ENCODE measurements at regions of chr10 and their contacts with region 1.

Region 1: DNA sequence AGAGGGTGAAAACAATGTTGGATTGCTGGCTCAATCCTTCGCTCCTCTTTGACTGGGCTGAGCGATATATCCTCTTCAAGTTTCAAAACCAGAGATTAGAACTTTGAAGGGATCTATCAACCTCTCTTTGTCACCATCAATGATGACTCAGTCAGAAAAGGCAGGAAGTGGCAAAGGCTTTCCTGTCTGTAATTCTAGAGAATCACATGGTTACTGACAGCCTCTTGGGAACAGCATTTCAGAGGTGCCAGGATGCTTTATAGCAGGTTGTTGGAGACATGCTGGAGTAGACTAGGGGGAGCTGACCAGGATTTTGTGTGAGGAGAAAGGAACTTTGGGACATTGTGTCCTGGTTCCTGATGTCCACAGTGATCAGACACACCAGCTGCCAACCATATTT is 81.3 kb downstream of the PRKCQ start:
- DNase-seq: peak; percentile 48
- H3K4me3 Mint-ChIP-seq: peak overlapping the region; percentile 65
- H3K27ac Mint-ChIP-seq: peak overlapping the region; percentile 87
- H3K4me1 Mint-ChIP-seq: peaks cover 27% of the 10 kb centered on the region
- H3K27me3 Mint-ChIP-seq: no peaks in the 10 kb centered on the region

Region 2: DNA sequence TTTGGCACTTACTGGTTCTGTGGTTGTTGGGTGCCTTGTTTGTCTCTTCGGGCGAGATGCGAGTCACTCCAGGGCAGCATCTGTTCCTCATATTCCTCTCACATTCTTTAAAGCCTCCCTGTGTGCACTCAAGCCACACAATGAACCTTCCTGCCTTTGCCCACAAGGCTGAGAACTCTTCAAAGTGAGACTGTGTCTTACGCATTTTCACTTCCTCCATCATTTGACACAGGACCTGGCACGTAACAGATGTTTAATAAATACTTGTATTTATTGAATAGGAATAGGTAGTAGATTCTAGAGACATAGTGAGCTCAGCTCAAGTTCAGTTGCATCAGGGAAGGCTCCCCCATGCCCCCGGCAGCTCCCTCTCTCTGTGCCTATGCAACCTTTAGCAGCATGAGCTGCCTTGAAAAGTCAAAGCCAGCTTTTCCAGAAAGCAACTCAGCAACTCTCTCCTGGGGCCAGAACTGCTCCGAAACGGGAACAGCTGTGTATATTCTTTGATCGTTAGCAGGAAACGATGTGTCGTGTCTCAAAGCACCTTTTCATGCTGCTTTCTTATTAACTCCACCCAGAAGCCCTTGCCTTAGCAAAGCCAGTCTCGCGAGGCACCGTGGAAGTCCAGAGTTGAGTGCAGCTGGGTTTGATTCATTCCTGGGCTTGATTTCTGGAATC is 198.5 kb before region 1 on chr10:
- intact Hi-C with region 1: loop called (anchors 10 kb)
- DNase-seq: peak; percentile 15
- H3K4me3 Mint-ChIP-seq: peak overlapping the region; percentile 69
- H3K27ac Mint-ChIP-seq: peak overlapping the region; percentile 88
- H3K4me1 Mint-ChIP-seq: peaks cover 57% of the 10 kb centered on the region
- H3K27me3 Mint-ChIP-seq: no peaks in the 10 kb centered on the region

Region 3: GRCh38 chr10:6473901-6474370 is 24.8 kb before region 1 on chr10:
- intact Hi-C with region 1: loop called (anchors 1 kb)
- DNase-seq: no peak
- H3K4me3 Mint-ChIP-seq: peak overlapping the region; percentile 83
- H3K27ac Mint-ChIP-seq: peak overlapping the region; percentile 95
- H3K4me1 Mint-ChIP-seq: peaks cover 60% of the 10 kb centered on the region
- H3K27me3 Mint-ChIP-seq: no peaks in the 10 kb centered on the region

Region 4: GRCh38 chr10:6522230-6522629 is 23.5 kb after region 1 on chr10:
- intact Hi-C with region 1: no loop called
- DNase-seq: no peak
- H3K4me3 Mint-ChIP-seq: no peak overlapping the region
- H3K27ac Mint-ChIP-seq: no peak overlapping the region
- H3K4me1 Mint-ChIP-seq: peaks cover 66% of the 10 kb centered on the region
- H3K27me3 Mint-ChIP-seq: no peaks in the 10 kb centered on the region

Region 5: DNA sequence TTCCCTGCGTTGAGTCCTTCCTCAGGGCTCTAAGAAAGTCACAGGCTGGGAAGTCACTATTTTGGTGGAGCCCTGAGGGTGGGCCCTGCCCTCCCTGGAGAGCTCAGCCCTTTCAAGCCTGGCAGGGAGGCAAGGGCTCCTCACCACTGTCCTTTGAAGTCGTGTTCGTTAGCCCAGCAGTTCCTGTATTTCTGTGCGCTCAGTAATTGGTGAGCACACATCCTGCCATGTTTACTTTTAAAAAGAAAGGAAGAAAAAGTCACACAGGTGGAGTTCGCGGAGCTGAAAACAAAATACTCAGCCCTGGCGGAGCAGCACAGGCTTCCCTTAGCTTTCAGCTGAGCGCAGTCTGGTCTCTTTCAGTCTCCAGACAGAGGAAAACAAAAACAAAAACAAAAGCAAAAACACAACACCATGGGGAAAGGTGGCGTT is 44.2 kb after region 1 on chr10:
- intact Hi-C with region 1: loop called (anchors 1 kb)
- DNase-seq: no peak
- H3K4me3 Mint-ChIP-seq: peak overlapping the region; percentile 89
- H3K27ac Mint-ChIP-seq: peak overlapping the region; percentile 100
- H3K4me1 Mint-ChIP-seq: peaks cover 65% of the 10 kb centered on the region
- H3K27me3 Mint-ChIP-seq: no peaks in the 10 kb centered on the region

Region 6: GRCh38 chr10:6570893-6571292 is 72.1 kb after region 1 on chr10:
- intact Hi-C with region 1: no loop called
- DNase-seq: no peak
- H3K4me3 Mint-ChIP-seq: no peak overlapping the region
- H3K27ac Mint-ChIP-seq: no peak overlapping the region
- H3K4me1 Mint-ChIP-seq: peaks cover 71% of the 10 kb centered on the region
- H3K27me3 Mint-ChIP-seq: no peaks in the 10 kb centered on the region

Region 7: GRCh38 chr10:6667679-6668270 is 169.0 kb after region 1 on chr10:
- intact Hi-C with region 1: loop called (anchors 5 kb)
- DNase-seq: no peak
- H3K4me3 Mint-ChIP-seq: no peak overlapping the region
- H3K27ac Mint-ChIP-seq: no peak overlapping the region
- H3K4me1 Mint-ChIP-seq: peaks cover 40% of the 10 kb centered on the region
- H3K27me3 Mint-ChIP-seq: no peaks in the 10 kb centered on the region

Measured in activated T-helper 2 cell treated with anti-CD3 and anti-CD28 coated beads, Interferon-gamma antibody, Interleukin-2, Interleukin-4, amounts not matched to agents 10 μg/mL and 5 μg/mL and 100 μg/mL, durations not matched to agents 14 hours and 24 hours and 36 hours (primary cell).